Endothelial cell of umbilical vein (primary cell): ENCODE measurements at regions of chr1 and their contacts with region 1.

Region 1: GRCh38 chr1:84077476-84078107 is 66.5 kb upstream of the PRKACB start:
- DNase-seq: peak; percentile 78
- H3K4me3 ChIP-seq: peak overlapping the region; percentile 63 to 100 (median 72)
- H3K27ac ChIP-seq: peak overlapping the region; percentile 79
- H3K4me1 ChIP-seq: peaks cover 18% of the 10 kb centered on the region
- H3K27me3 ChIP-seq: no peaks in the 10 kb centered on the region
- CTCF ChIP-seq: no peak
- POLR2A ChIP-seq: peak; percentile 57

Region 2: GRCh38 chr1:83998498-83999315 is 78.9 kb before region 1 on chr1 and contains the start of gene TTLL7:
- CTCF ChIA-PET with region 1: no interaction called
- POLR2A ChIA-PET with region 1: no interaction called
- dilution Hi-C with region 1: no loop called
- intact Hi-C with region 1: loop called (anchors 1 kb)
- DNase-seq: peak; percentile 68
- H3K4me3 ChIP-seq: peak within 1 kb of the TSS; percentile 63 to 76 (median 74)
- H3K27ac ChIP-seq: peak within 1 kb of the TSS; percentile 88
- H3K4me1 ChIP-seq: peaks cover 17% of the 10 kb centered on the region
- H3K27me3 ChIP-seq: peaks cover 4 to 5% of the 10 kb centered on the region in 2 experiments
- CTCF ChIP-seq: no peak
- POLR2A ChIP-seq: no peak
- total RNA-seq, gene TTLL7: 4.9 and 11.7 TPM in 2 replicates

Region 3: GRCh38 chr1:84103197-84103992 is 25.8 kb after region 1 on chr1:
- CTCF ChIA-PET with region 1: interaction called, 3 read pairs
- POLR2A ChIA-PET with region 1: no interaction called
- dilution Hi-C with region 1: no loop called
- intact Hi-C with region 1: loop called (anchors 2 kb)
- DNase-seq: peak; percentile 77
- H3K4me3 ChIP-seq: no peak overlapping the region
- H3K27ac ChIP-seq: peak overlapping the region; percentile 35
- H3K4me1 ChIP-seq: peaks cover 9% of the 10 kb centered on the region
- H3K27me3 ChIP-seq: no peaks in the 10 kb centered on the region
- CTCF ChIP-seq: no peak
- POLR2A ChIP-seq: no peak

Region 4: DNA sequence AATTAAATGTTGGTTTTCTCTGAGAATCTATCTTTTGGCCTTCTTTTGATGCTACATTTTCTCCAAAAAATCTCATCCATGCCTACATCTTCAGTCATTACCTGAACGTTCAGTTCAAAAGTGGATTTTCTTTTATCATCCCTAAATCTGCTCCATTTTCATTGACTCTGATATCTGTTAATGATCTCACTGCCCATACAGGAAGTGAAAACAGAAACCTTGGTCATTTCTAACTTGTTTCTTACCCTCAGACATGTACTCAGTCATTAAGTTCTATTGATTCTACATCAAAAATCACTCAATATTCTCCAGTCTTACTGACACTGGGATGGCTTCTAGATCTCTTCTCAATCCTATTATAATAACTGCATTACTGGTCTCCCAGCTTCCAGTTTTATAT is 89.2 kb after region 1 on chr1:
- CTCF ChIA-PET with region 1: no interaction called
- POLR2A ChIA-PET with region 1: no interaction called
- dilution Hi-C with region 1: no loop called
- intact Hi-C with region 1: no loop called
- DNase-seq: no peak
- H3K4me3 ChIP-seq: no peak overlapping the region
- H3K27ac ChIP-seq: no peak overlapping the region
- H3K4me1 ChIP-seq: peaks cover 24% of the 10 kb centered on the region
- H3K27me3 ChIP-seq: no peaks in the 10 kb centered on the region
- CTCF ChIP-seq: no peak
- POLR2A ChIP-seq: no peak

Region 5: GRCh38 chr1:84247425-84248220 is 170.0 kb after region 1 on chr1:
- CTCF ChIA-PET with region 1: no interaction called
- POLR2A ChIA-PET with region 1: no interaction called
- dilution Hi-C with region 1: no loop called
- intact Hi-C with region 1: loop called (anchors 2 kb)
- DNase-seq: no peak
- H3K4me3 ChIP-seq: peak overlapping the region in 1 of 3 experiments; percentile 18
- H3K27ac ChIP-seq: peak overlapping the region; percentile 90
- H3K4me1 ChIP-seq: peaks cover 35% of the 10 kb centered on the region
- H3K27me3 ChIP-seq: no peaks in the 10 kb centered on the region
- CTCF ChIP-seq: no peak
- POLR2A ChIP-seq: no peak

Region 6: DNA sequence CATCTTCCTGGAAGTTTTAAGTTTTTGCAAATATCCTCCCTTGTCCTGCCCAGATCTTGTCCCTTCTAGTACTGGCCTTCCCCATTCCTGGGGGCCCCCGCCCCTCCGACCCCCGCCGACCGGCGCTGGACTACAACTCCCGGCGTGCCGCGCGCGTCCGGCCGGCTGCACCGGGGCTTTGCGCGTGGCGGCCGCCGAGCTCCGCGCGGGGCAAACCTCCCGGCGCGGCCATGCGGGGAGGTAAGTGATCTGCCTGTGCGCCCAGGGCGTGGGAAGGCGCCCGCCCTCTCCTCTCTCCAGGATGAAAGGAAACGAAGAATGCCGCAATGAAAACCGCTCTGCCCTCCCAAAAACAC is 220.7 kb after region 1 on chr1:
- CTCF ChIA-PET with region 1: no interaction called
- POLR2A ChIA-PET with region 1: no interaction called
- dilution Hi-C with region 1: no loop called
- intact Hi-C with region 1: loop called (anchors 5 kb)
- DNase-seq: peak; percentile 61
- H3K4me3 ChIP-seq: peak overlapping the region; percentile 72 to 94 (median 78)
- H3K27ac ChIP-seq: peak overlapping the region; percentile 75
- H3K4me1 ChIP-seq: peaks cover 46% of the 10 kb centered on the region
- H3K27me3 ChIP-seq: no peaks in the 10 kb centered on the region
- CTCF ChIP-seq: no peak
- POLR2A ChIP-seq: peak; percentile 73

Region 7: DNA sequence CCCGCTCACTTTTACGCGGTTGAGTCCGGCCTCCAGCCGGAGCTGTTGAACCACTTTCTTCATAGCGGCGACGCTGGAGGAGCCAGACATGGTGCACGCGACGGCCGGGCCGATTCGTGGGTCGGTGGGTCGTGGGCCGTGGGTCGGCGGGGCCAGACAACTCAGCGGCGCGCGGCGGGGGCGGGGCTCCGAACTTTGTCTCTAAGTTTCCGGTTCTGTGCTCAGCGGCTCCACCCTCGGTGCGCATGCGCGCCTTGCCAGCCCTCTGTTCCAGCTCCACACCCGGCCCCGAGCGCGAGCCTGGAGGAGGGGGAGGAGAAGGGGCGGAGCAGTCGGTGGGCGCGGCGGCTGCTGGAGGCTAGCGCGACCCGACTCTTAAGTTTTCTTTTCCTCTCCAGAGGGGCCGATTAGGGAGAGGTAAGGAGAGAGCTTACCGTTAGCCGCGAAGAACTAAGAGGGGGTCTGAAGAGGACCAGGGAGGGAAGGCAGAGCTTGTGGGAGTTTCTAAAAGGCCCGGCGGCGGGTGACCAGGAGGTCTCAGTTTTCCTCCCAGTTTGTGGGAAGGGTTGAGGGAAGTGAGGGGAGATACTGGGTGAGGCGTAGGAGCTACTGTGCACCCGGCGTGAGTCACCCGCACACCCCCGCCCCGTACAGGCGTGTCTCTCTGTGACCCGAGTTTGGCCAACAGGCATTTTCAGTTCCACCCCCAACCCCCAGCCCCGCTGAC is 428.6 kb after region 1 on chr1 and contains the starts of genes GNG5 and SPATA1:
- CTCF ChIA-PET with region 1: no interaction called
- POLR2A ChIA-PET with region 1: no interaction called
- dilution Hi-C with region 1: no loop called
- intact Hi-C with region 1: loop called (anchors 2 kb)
- DNase-seq: peak; percentile 97
- H3K4me3 ChIP-seq: peak within 1 kb of the TSS; percentile 55 to 89 (median 73)
- H3K27ac ChIP-seq: peak within 1 kb of the TSS; percentile 91
- H3K4me1 ChIP-seq: peaks cover 25% of the 10 kb centered on the region
- H3K27me3 ChIP-seq: no peaks in the 10 kb centered on the region
- CTCF ChIP-seq: no peak
- POLR2A ChIP-seq: peak; percentile 81
- total RNA-seq, gene GNG5: 172 and 175 TPM in 2 replicates
- total RNA-seq, gene SPATA1: 1.7 and 2.6 TPM in 2 replicates